Heart right ventricle (tissue), 16 donors: ENCODE measurements at regions of chr20 and their contacts with region 1.

Region 1: GRCh38 chr20:11880680-11881079 is 37.0 kb upstream of the BTBD3 start:
- DNase-seq: no peak
- ATAC-seq: no peak
- H3K4me3 ChIP-seq: no peak overlapping the region
- H3K27ac ChIP-seq: no peak overlapping the region
- H3K4me1 ChIP-seq: no peaks in the 10 kb centered on the region
- H3K27me3 ChIP-seq: no peaks in the 10 kb centered on the region
- CTCF ChIP-seq: no peak

Region 2: GRCh38 chr20:11826334-11826733 is 54.3 kb before region 1 on chr20:
- intact Hi-C with region 1: loop called in 1 of 10 experiments (anchors 10 kb)
- DNase-seq: no peak
- ATAC-seq: no peak
- H3K4me3 ChIP-seq: no peak overlapping the region
- H3K27ac ChIP-seq: no peak overlapping the region
- H3K4me1 ChIP-seq: peaks cover 0 to 5% (median 0%) of the 10 kb centered on the region in 9 donors
- H3K27me3 ChIP-seq: no peaks in the 10 kb centered on the region
- CTCF ChIP-seq: no peak

Region 3: DNA sequence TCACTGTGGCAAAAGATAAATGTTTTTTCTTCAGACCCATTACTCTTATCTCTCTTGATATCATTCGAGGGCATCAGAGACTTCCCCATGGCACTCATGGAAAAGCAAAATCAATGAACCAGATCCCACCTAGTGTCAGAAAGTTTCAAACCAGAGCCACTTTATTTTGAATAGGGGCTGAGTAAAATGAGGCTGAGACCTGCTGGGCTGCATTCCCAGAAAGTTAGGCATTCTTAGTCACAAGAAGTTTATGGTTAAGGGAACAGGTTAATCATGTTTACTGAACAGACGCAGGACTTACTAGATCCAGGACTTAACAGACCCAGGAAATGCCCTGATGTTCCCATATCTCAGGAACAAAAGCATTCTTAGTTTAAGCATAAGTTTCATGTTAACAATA is 406.9 kb after region 1 on chr20:
- intact Hi-C with region 1: no loop called
- DNase-seq: no peak
- ATAC-seq: no peak
- H3K4me3 ChIP-seq: no peak overlapping the region
- H3K27ac ChIP-seq: no peak overlapping the region
- H3K4me1 ChIP-seq: no peaks in the 10 kb centered on the region
- H3K27me3 ChIP-seq: no peaks in the 10 kb centered on the region
- CTCF ChIP-seq: no peak